ENCODE measurements at regions of chr2 and their contacts with region 1.

Region 1: GRCh38 chr2:18560031-18560796 is at the start of gene RDH14:
- DNase-seq: peak; percentile 87
- H3K4me3 Mint-ChIP-seq: peak within 1 kb of the TSS; percentile 91
- H3K27ac Mint-ChIP-seq: peak within 1 kb of the TSS; percentile 91
- H3K4me1 Mint-ChIP-seq: peaks cover 38% of the 10 kb centered on the region
- H3K27me3 Mint-ChIP-seq: no peaks in the 10 kb centered on the region
- total RNA-seq, gene RDH14: 12.4 and 14.5 TPM in 2 replicates

Region 2: DNA sequence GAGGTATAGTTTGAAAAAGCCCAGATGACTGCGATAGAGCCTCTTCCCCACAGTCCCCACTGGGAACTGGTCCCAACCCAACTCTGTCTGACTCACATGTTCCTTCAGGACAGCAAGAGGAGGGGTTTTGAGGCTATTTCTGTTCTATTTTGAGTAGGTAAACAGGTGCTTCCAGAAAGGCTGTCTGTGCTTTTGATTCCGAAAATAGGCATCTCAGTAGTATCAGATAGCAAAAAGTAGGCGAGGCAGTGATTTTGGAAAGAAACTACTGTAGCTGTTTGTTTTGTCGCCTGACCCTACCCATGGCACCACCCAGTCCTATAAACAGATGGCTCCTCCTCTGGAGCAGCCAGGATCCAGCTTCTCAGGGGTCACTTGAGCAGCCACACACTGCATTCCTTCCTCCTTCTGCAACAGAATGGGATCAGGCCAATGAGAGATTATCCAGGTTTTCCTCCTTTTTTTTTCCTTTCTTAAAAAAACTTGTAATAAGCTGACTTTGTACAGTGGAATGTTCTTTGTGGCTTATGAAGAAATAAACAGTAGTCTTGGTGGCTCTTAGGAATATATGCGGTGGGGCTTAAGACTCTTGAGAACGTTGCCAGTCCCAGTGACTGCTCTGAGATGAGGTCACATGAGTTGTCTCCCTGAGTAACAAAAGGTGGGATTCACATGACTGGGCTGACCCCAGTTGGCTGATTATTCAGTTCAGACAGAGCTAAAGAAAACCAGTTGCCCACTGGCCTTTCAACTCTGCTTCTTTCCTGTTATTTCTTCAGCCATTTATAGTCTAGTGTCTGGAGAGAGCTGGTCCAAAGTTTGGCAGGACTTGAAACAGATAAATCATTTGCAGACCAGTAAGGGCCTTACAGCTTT is 583.1 kb before region 1 on chr2:
- intact Hi-C with region 1: no loop called
- DNase-seq: no peak
- H3K4me3 Mint-ChIP-seq: no peak overlapping the region
- H3K27ac Mint-ChIP-seq: no peak overlapping the region
- H3K4me1 Mint-ChIP-seq: no peaks in the 10 kb centered on the region
- H3K27me3 Mint-ChIP-seq: peaks cover 2% of the 10 kb centered on the region

Region 3: DNA sequence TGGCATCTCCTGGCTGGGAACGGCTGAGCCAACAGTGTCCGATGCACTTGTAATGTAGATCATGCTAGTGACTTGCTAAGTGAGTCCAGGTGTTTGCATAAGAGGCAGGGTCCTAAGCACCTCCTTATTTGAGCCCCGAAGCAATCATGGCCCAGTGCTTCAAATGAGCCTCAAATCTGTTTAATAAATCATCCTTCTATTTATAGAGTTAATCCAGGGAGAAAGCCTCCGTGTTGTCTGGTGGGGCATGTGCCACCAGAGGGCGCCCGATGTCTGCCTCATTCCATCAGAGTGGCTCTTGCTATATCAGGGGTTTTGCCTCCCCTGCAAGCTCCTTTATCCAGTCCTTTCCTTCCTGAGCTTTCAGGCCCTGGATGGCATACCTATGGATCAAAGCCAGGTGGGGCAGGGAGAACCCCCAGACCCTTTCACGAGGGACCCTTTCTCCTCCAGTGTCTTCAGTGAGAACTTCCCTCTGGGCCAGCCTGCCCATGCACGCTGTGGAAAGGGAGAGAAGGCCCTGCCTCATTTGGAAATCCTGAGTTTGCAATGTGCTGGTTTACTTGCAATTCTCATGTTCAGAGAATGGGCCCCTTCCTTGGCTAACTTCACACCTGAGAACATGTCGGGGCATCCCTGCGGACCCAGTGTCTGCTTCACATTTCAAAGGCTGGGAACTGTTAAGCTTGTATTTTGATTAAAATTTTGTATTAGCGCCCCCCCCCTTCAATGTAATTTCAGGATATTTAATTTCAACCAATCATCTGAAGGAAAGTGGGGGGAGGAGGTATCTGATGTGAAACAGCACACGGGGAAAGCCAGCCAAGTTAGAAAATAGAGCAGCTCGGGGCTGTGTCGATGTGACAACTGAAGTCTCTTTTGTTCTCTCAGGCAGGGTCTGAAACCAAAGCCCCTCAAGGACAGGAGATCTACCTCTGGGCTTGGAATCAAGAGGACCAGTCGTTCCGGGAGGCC is 39.5 kb before region 1 on chr2:
- intact Hi-C with region 1: loop called (anchors 2 kb)
- DNase-seq: peak; percentile 46
- H3K4me3 Mint-ChIP-seq: no peak overlapping the region
- H3K27ac Mint-ChIP-seq: no peak overlapping the region
- H3K4me1 Mint-ChIP-seq: no peaks in the 10 kb centered on the region
- H3K27me3 Mint-ChIP-seq: peaks cover 8% of the 10 kb centered on the region

Region 4: DNA sequence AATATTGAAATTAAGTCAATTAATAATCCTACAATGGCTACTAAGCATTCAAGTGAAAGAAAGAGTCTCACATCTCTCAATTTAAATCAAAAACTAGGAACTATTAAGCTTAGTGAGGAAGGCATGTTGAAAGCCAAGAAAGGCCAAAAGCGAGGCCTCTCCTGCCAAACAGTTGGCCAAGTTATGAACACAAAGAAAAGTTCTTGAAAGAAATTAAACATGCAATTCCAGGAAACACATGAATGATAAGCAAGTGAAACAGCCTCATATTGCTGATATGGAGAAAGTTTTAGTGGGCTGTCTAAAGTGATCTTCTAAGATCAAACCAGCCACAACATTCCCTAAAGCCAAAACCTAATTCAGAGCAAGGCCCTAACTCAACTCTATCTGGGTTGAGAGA is 11.6 kb before region 1 on chr2:
- intact Hi-C with region 1: no loop called
- DNase-seq: no peak
- H3K4me3 Mint-ChIP-seq: no peak overlapping the region
- H3K27ac Mint-ChIP-seq: no peak overlapping the region
- H3K4me1 Mint-ChIP-seq: peaks cover 48% of the 10 kb centered on the region
- H3K27me3 Mint-ChIP-seq: no peaks in the 10 kb centered on the region

Region 5: GRCh38 chr2:19362755-19363473 is 802.7 kb after region 1 on chr2:
- intact Hi-C with region 1: loop called (anchors 1 kb)
- DNase-seq: no peak
- H3K4me3 Mint-ChIP-seq: peak overlapping the region; percentile 90
- H3K27ac Mint-ChIP-seq: no peak overlapping the region
- H3K4me1 Mint-ChIP-seq: peaks cover 24% of the 10 kb centered on the region
- H3K27me3 Mint-ChIP-seq: peaks cover 94% of the 10 kb centered on the region

Region 6: DNA sequence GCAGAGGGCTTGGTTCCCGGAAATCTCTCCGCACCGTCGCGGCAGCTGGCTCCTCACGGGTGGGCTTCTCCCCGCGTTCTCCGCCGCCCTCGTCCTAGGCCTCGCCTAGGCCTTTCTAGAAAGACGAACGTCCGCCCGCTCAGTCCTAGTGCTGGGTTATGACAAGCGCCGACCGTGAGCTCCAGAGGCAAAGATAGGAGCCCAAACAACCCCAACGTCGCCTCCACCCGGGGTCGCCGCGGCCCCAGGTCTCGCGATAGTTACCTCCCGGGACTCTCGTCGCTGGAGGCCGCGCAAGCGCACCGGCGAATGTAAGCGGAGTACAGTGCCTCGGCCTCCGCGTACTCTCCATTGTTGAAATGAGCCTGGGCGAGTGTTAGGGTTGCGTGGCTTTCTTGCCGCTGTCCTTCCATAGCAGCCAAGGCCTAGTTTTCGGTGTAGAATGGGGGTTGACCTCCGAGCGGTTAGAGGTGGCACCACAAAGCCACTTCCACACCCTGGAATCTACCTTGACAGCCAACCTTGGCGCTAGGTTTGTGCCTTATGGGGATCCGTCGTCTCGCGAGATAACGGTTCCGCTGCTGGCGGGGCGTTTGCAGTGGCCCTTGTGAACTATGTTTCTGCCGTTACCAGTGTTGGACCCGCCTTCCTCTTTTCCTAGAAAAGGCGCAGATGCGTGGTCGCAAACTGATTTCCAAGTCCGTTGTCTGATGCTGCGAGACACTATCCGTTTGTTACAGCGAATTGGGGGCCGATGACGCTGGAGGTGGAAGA is 1341.4 kb after region 1 on chr2 and contains the start of gene TTC32:
- intact Hi-C with region 1: loop called (anchors 1 kb)
- DNase-seq: peak; percentile 89
- H3K4me3 Mint-ChIP-seq: peak within 1 kb of the TSS; percentile 91
- H3K27ac Mint-ChIP-seq: peak within 1 kb of the TSS; percentile 94
- H3K4me1 Mint-ChIP-seq: peaks cover 48% of the 10 kb centered on the region
- H3K27me3 Mint-ChIP-seq: peaks cover 9% of the 10 kb centered on the region
- total RNA-seq, gene TTC32: 14.0 and 15.7 TPM in 2 replicates

Measured in activated T-helper 1 cell treated with anti-CD3 and anti-CD28 coated beads, Interleukin-12 subunit alpha, Interleukin-12 subunit beta, Interleukin-2, Interleukin-4 antibody, amounts not matched to agents 30 ng/mL and 10 ng/mL and 1 ng/mL, durations not matched to agents 14 hours and 24 hours and 36 hours (primary cell).